ENCODE measurements at regions of chr9 and their contacts with region 1.

Region 1: GRCh38 chr9:32251539-32251938 is 132.9 kb upstream of the ACO1 start:
- DNase-seq: peak; percentile 33 to 61
- H3K4me3 ChIP-seq: no peak overlapping the region
- H3K27ac ChIP-seq: no peak overlapping the region
- H3K4me1 ChIP-seq: no peaks in the 10 kb centered on the region
- H3K27me3 ChIP-seq: no peaks in the 10 kb centered on the region
- CTCF ChIP-seq: peak; percentile 38 to 83 (median 80)
- EP300 ChIP-seq: no peak
- POLR2A ChIP-seq: no peak
- RAD21 ChIP-seq: peak; percentile 94

Region 2: GRCh38 chr9:32142074-32142473 is 109.5 kb before region 1 on chr9:
- CTCF ChIA-PET with region 1: interaction called, 18 read pairs
- POLR2A ChIA-PET with region 1: no interaction called
- DNase-seq: no peak
- H3K4me3 ChIP-seq: no peak overlapping the region
- H3K27ac ChIP-seq: no peak overlapping the region
- H3K4me1 ChIP-seq: no peaks in the 10 kb centered on the region
- H3K27me3 ChIP-seq: no peaks in the 10 kb centered on the region
- CTCF ChIP-seq: no peak
- EP300 ChIP-seq: no peak
- POLR2A ChIP-seq: no peak
- RAD21 ChIP-seq: no peak